Cardiac septum (tissue), 1 donor: ENCODE measurements at regions of chr5 and their contacts with region 1.

Region 1: GRCh38 chr5:111550279-111551020 is 38.1 kb upstream of the STARD4 start:
- DNase-seq: peak; percentile 86

Region 2: DNA sequence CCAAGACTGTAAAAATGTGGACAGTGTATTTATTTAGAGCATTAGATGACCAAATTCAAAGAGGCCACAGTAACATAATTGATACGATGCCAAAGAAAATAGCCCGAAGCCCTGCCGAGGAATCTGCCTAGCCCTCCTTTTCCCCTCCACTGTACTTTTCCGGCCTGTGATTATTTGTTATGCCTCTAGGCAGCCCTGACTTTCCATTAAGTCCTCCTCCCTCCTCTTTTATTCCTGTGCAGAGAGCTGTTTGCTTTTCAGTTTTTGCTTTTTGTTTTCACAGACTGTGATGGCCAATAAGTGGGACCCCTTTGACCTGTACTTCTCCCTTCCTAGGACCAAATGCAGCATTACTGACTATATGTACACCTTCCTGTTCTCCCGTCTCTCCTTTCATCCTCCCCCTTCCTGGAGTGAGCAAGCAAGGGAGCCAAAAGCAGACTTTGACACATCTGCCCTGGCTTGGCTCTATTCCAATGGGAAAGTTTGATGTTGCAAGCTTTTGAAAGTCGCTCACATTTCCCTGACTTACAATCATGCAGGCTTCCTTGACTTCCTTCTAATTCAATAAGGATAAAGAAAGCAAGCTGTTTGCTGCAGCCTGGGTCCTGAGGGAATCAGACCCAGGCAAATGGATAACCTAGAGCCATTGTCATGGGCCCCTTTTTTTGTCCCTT is 130.4 kb after region 1 on chr5:
- intact Hi-C with region 1: loop called (anchors 2 kb)
- DNase-seq: no peak

Region 3: GRCh38 chr5:111757355-111758283 is 207.2 kb after region 1 on chr5:
- intact Hi-C with region 1: loop called (anchors 1 kb)
- DNase-seq: peak; percentile 97

Region 4: GRCh38 chr5:112012104-112012503 is 461.7 kb after region 1 on chr5:
- intact Hi-C with region 1: loop called (anchors 10 kb)
- DNase-seq: no peak